Caco-2 (cell line): ENCODE measurements at regions of chr14 and their contacts with region 1.

Region 1: DNA sequence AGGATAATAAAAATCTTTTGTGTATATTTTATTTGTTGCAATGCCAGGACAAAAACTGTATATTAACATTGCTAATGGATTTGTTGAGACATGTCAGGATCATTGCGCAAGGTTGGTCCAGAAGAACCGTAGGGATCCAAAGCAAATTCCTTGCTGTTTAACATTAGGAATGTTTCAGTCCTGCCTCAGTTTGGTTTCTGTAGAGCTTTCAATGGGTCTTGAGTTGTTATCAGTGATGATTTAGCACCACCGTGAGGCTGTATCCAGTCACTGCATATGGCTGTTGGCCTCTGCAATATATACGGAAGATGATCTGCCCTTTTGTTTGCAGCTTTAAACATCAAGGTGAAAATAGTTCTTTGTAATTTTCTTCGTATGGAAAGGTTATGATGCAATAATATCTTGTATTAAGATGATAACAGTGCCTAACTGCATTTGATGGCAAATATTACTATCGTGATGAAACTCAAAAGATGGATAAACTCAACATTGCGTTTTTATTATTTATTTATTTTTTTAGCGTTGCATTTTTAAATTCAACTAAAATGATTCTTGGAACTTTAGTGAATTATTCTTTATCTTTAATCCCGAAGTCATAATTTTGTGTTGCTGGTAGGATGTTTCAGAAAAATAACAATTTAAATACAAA is 231.2 kb downstream of the AKAP6 start:
- DNase-seq: peak; percentile 59 to 71
- H3K4me3 ChIP-seq: no peak overlapping the region
- H3K4me3 Mint-ChIP-seq: no peak overlapping the region
- H3K27ac Mint-ChIP-seq: no peak overlapping the region
- H3K4me1 ChIP-seq: peaks cover 16% of the 10 kb centered on the region
- H3K4me1 Mint-ChIP-seq: no peaks in the 10 kb centered on the region
- H3K27me3 ChIP-seq: no peaks in the 10 kb centered on the region
- H3K27me3 Mint-ChIP-seq: no peaks in the 10 kb centered on the region
- CTCF ChIP-seq: peak; percentile 77 to 79

Region 2: GRCh38 chr14:31510222-31510621 is 1050.1 kb before region 1 on chr14:
- CTCF ChIA-PET with region 1: no interaction called
- POLR2A ChIA-PET with region 1: no interaction called
- intact Hi-C with region 1: loop called (anchors 10 kb)
- DNase-seq: no peak
- H3K4me3 ChIP-seq: no peak overlapping the region
- H3K4me3 Mint-ChIP-seq: no peak overlapping the region
- H3K27ac Mint-ChIP-seq: no peak overlapping the region
- H3K4me1 ChIP-seq: no peaks in the 10 kb centered on the region
- H3K4me1 Mint-ChIP-seq: no peaks in the 10 kb centered on the region
- H3K27me3 ChIP-seq: no peaks in the 10 kb centered on the region
- H3K27me3 Mint-ChIP-seq: peaks cover 7% of the 10 kb centered on the region
- CTCF ChIP-seq: peak; percentile 48 to 51

Region 3: DNA sequence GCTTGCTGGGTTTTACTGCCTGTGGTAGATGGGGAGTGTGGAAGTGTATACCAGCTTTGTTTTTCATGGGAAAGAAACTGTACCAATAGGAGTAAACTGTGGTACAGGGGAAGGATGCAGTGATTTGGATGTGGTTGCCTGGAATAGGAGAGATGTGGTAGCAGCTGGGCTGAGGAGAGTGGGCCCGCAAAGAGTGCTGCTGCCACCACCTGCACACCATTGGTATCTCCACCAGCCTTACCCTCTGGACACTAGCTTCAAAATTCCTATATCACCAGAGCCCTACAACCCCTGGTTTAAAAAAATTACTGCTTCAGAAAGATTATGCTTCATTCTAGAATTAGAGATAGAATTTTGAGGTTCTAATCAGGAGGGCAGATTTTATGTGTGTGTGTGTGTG is 177.6 kb before region 1 on chr14:
- CTCF ChIA-PET with region 1: interaction called, 3 read pairs
- POLR2A ChIA-PET with region 1: no interaction called
- intact Hi-C with region 1: loop called (anchors 1 kb)
- DNase-seq: peak in 1 of 2 experiments; percentile 54
- H3K4me3 ChIP-seq: no peak overlapping the region
- H3K4me3 Mint-ChIP-seq: no peak overlapping the region
- H3K27ac Mint-ChIP-seq: no peak overlapping the region
- H3K4me1 ChIP-seq: peaks cover 64% of the 10 kb centered on the region
- H3K4me1 Mint-ChIP-seq: peaks cover 51% of the 10 kb centered on the region
- H3K27me3 ChIP-seq: no peaks in the 10 kb centered on the region
- H3K27me3 Mint-ChIP-seq: no peaks in the 10 kb centered on the region
- CTCF ChIP-seq: peak; percentile 23 to 63

Region 4: GRCh38 chr14:32513571-32514009 is 46.7 kb before region 1 on chr14:
- CTCF ChIA-PET with region 1: interaction called, 12 read pairs
- POLR2A ChIA-PET with region 1: no interaction called
- intact Hi-C with region 1: no loop called
- DNase-seq: no peak
- H3K4me3 ChIP-seq: no peak overlapping the region
- H3K4me3 Mint-ChIP-seq: no peak overlapping the region
- H3K27ac Mint-ChIP-seq: no peak overlapping the region
- H3K4me1 ChIP-seq: peaks cover 20% of the 10 kb centered on the region
- H3K4me1 Mint-ChIP-seq: peaks cover 11% of the 10 kb centered on the region
- H3K27me3 ChIP-seq: no peaks in the 10 kb centered on the region
- H3K27me3 Mint-ChIP-seq: no peaks in the 10 kb centered on the region
- CTCF ChIP-seq: peak; percentile 38 to 48